Cardiac septum (tissue), 1 donor: ENCODE measurements at regions of chr13 and their contacts with region 1.

Region 1: DNA sequence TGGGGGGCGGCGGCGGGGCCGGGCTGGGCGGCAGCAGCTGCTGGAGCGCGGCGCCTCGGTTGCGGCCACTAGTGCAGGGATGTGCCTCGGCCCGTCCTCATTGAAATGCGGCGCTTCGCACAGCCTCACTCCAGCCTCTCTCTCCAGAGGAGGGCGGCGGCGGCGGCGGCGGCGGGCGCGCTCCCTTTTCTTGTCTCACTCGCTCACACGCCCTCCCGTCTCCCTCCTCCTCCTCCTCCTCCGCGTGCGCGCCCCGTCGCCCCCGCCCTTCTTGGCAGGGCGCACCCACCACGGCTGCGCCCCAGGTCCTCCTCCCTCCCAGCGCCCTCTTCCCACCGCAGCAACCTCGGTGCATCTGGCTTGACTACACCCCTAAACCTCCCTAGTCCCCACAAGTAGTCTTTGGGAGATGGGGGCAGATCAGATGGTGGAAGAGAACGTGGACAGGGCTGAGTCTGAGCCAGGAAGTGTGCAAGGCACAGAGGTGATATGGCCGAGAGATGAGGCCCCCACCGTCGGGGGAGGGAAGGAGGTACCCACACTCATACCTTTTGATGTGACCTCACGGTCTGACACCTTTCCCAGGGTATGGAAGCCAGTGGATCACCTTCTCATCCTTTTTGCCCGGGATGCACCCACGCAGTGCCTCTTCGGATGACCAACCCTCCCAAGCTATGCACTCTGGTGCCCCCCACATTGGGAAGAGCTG is at the start of gene DCLK1:
- DNase-seq: no peak
- total RNA-seq, gene DCLK1: 13.8 TPM

Region 2: GRCh38 chr13:36275190-36276002 is 144.0 kb after region 1 on chr13:
- intact Hi-C with region 1: loop called (anchors 10 kb)
- DNase-seq: no peak